ENCODE measurements at regions of chr2 and their contacts with region 1.

Region 1: DNA sequence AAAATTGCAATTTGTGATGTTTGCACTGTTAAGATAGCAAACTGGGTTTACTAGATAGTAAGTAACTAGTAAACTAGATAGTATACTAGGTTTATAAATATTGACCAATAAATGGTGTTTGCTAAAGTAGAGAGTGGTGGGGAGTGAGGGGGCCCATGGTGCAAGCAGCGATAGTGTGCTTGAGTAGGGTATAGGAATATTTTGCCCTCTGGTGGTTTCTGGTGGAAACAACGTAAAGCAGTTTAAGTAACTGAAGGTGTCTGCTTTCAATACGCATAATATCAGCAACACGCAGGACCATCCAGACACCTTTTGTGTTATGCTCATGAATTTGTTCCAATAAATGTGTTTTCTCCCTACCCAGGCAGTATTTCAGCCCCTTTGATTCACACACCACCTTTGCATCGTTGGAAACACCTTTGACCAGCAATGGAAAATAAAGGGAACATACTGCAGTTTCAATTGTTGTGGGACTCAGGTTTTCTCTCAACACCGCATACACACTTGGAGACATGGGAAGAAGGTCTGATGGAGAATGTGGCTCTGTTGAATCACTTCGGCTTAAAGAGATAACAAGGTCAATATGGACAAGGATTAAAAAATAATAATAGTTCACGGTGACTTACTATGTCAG is 16.7 kb upstream of the STAT1 start:
- DNase-seq: no peak
- H3K4me3 Mint-ChIP-seq: no peak overlapping the region
- H3K27ac Mint-ChIP-seq: peak overlapping the region; percentile 36
- H3K4me1 Mint-ChIP-seq: peaks cover 41% of the 10 kb centered on the region
- H3K27me3 Mint-ChIP-seq: no peaks in the 10 kb centered on the region

Region 2: GRCh38 chr2:190929919-190930318 is 100.7 kb before region 1 on chr2:
- intact Hi-C with region 1: no loop called
- DNase-seq: no peak
- H3K4me3 Mint-ChIP-seq: no peak overlapping the region
- H3K27ac Mint-ChIP-seq: no peak overlapping the region
- H3K4me1 Mint-ChIP-seq: peaks cover 10% of the 10 kb centered on the region
- H3K27me3 Mint-ChIP-seq: no peaks in the 10 kb centered on the region

Region 3: GRCh38 chr2:190984595-190984994 is 46.0 kb before region 1 on chr2:
- intact Hi-C with region 1: loop called (anchors 2 kb)
- DNase-seq: no peak
- H3K4me3 Mint-ChIP-seq: no peak overlapping the region
- H3K27ac Mint-ChIP-seq: peak overlapping the region; percentile 69
- H3K4me1 Mint-ChIP-seq: peaks cover 61% of the 10 kb centered on the region
- H3K27me3 Mint-ChIP-seq: no peaks in the 10 kb centered on the region

Region 4: GRCh38 chr2:190996338-190996946 is 34.2 kb before region 1 on chr2:
- intact Hi-C with region 1: loop called (anchors 1 kb)
- DNase-seq: no peak
- H3K4me3 Mint-ChIP-seq: no peak overlapping the region
- H3K27ac Mint-ChIP-seq: peak overlapping the region; percentile 77
- H3K4me1 Mint-ChIP-seq: peaks cover 59% of the 10 kb centered on the region
- H3K27me3 Mint-ChIP-seq: no peaks in the 10 kb centered on the region

Region 5: GRCh38 chr2:191013932-191014652 is 16.5 kb before region 1 on chr2 and contains the start of gene STAT1:
- intact Hi-C with region 1: loop called (anchors 2 kb)
- DNase-seq: peak; percentile 96
- H3K4me3 Mint-ChIP-seq: no peak within 1 kb of the TSS
- H3K27ac Mint-ChIP-seq: no peak within 1 kb of the TSS
- H3K4me1 Mint-ChIP-seq: peaks cover 40% of the 10 kb centered on the region
- H3K27me3 Mint-ChIP-seq: no peaks in the 10 kb centered on the region
- total RNA-seq, gene STAT1: 135 and 139 TPM in 2 replicates

Measured in activated T-helper 2 cell treated with anti-CD3 and anti-CD28 coated beads, Interferon-gamma antibody, Interleukin-2, Interleukin-4, amounts not matched to agents 10 μg/mL and 5 μg/mL and 100 μg/mL, durations not matched to agents 14 hours and 24 hours and 36 hours (primary cell).